IMR-90 (cell line): ENCODE measurements at regions of chrX and their contacts with region 1.

Region 1: DNA sequence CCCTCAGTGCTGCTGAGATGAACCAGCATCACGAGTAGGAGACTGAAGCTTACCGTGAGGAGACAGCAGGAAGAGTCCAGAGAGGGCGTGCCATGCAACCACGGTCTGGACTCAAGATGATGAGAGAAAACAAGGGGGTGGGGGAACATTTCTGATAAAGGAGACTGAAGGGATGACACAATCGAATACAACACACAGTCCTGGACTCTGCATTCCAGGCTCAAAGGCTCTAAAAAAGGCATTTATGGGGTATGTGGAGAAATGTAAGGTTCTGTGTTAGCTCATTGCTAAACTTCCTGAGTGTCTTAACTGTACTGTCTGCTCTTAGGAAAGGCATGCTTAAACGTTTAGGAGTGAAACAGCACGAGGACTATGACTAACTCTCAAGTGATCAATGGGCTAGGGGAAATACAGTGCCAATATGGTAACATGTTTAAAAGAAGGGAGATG is 20.6 kb upstream of the IRAK1 start:
- DNase-seq: peak; percentile 87
- ATAC-seq: peak; percentile 88
- H3K4me3 ChIP-seq: no peak overlapping the region
- H3K27ac ChIP-seq: peak overlapping the region; percentile 64; the same call in 1 of the 2 replicates
- H3K4me1 ChIP-seq: peaks cover 16% of the 10 kb centered on the region
- H3K27me3 ChIP-seq: no peaks in the 10 kb centered on the region
- CTCF ChIP-seq: no peak
- POLR2A ChIP-seq: no peak
- RAD21 ChIP-seq: no peak

Region 2: DNA sequence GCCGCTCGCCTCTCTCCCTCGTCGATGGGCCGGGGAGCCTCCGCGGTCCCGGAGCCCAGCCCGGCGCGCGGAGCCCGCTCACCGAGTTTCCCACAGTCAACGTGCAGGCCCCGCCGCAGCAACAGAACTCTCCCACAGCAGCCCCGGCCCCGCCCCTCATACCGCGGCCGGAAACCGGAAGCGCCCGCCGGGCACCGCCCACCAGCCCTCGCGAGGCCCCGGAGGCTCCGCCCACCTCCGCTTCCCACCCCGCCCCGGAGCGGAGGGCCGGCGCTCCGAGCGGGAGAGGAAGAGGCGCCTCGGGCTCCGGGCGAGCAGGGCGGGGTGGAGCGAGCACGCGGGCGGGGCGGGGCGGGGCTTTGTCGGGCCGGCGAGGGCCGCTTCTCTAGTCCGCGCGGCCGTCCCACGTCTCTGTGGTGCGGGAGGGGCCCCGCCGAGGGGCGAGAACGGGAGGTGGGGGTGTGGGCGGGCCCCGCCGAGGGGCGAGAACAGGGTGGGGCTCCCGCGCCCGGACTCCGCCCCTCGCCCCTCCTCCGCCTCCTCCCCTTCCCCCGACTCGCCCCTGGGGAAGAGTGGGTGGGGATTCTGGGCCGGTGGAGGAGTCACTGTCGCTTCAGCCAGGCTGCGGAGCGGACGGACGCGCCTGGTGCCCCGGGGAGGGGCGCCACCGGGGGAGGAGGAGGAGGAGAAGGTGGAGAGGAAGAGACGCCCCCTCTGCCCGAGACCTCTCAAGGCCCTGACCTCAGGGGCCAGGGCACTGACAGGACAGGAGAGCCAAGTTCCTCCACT is 315.9 kb before region 1 on chrX and contains the starts of genes ABCD1 and BCAP31:
- CTCF ChIA-PET with region 1: no interaction called
- POLR2A ChIA-PET with region 1: no interaction called
- dilution Hi-C with region 1: no loop called
- in situ Hi-C with region 1: no loop called
- intact Hi-C with region 1: no loop called
- DNase-seq: peak; percentile 78
- ATAC-seq: peak; percentile 86
- H3K4me3 ChIP-seq: peak within 1 kb of the TSS; percentile 82
- H3K27ac ChIP-seq: peak within 1 kb of the TSS; percentile 77
- H3K4me1 ChIP-seq: peaks cover 17% of the 10 kb centered on the region
- H3K27me3 ChIP-seq: no peaks in the 10 kb centered on the region
- CTCF ChIP-seq: no peak
- POLR2A ChIP-seq: peak; percentile 84
- RAD21 ChIP-seq: no peak
- total RNA-seq, gene ABCD1: 4.3 and 4.7 TPM in 2 replicates
- total RNA-seq, gene BCAP31: 166 and 244 TPM in 2 replicates

Region 3: DNA sequence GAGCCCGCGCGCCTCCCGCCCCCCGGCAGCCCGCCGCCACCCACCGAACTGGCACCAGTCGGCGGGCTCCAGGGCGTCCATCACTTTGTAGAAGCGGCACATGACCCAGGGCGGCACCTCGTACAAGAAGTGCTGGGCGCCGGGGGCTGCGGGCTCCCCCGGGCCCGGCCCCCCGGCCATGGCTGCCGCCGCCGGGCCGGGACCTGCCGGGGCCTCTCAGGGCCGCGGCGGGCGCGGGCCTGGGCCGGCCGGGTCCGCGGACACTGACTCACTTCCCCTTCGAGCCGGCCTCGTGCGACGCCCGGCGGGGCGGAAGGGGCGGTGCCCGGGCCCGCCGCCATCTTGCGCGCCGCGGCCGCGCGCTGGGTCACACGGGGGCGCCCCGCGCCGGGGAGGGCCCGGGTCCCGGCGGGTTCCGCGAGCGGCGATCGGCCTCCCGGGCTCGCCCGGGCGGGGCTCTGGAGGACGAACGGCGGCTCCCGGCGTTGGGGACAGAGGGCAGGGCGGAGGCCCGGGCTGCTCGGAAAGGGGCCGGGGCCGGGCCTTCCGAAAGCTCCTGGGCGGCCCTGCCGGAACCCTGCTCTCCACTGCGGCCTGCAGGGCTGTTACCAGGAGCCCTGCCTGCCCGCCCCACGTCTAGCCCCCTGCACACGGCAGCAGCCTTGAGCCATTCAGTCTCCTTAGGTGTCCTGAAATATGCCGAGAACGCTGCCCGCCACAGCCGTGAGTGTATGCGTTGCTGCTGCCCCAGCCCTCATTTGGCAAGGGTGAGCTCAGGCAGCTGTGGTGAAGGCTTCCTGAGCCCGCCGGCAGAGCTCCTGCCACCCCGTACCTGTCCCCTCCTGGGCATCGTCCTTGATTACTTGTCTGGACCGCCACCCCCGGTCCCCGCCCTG is 20.5 kb before region 1 on chrX and contains the start of gene IRAK1:
- CTCF ChIA-PET with region 1: no interaction called
- POLR2A ChIA-PET with region 1: no interaction called
- dilution Hi-C with region 1: no loop called
- in situ Hi-C with region 1: no loop called
- intact Hi-C with region 1: loop called (anchors 1 kb)
- DNase-seq: peak; percentile 52
- ATAC-seq: peak; percentile 79
- H3K4me3 ChIP-seq: peak within 1 kb of the TSS; percentile 59
- H3K27ac ChIP-seq: peak within 1 kb of the TSS; percentile 93
- H3K4me1 ChIP-seq: peaks cover 24% of the 10 kb centered on the region
- H3K27me3 ChIP-seq: no peaks in the 10 kb centered on the region
- CTCF ChIP-seq: 0 out of 2 replicates have a peak, but pooled peaks have one; percentile 17
- POLR2A ChIP-seq: peak; percentile 42; the same call in 1 of the 2 replicates
- RAD21 ChIP-seq: no peak
- total RNA-seq, gene IRAK1: 31.9 and 33.3 TPM in 2 replicates

Region 4: DNA sequence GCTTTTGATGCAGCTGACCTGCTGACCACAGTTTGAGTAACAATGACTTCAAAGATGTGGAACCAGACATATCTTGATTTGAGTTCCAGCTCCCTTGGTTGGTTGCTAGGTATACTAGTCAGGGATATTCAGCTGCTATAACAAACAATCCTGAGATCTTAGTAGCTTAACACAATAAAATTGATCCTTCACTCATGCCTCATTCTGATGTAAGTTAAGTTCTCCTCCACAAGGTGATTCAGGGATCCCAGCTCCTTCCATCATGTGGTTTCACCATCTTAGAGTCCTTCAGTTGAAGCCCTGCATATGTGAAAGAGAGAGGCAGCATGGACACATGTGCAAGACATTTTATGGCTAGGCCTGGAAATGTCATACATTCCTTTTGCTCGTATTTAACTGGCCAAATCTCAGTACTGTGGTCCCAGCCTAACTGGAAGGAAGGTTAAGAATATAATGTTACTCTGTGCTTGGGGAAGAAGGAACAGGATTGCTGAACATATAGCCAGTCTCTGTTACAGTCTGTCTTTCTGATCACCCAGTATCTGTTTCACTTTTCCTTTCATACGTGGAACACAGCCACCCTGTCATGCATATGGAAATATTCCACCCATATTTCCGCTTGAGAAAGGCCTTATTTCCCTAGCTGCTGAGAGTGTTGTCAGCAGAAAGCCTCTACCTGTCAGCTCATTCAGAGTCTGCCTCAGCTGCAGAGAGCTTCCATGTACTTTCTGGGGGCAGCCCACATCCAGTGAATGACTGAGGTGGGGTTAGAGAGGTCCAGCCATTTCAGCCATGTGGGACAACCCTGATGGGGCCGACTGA is 787.1 kb after region 1 on chrX:
- CTCF ChIA-PET with region 1: no interaction called
- POLR2A ChIA-PET with region 1: no interaction called
- dilution Hi-C with region 1: no loop called
- in situ Hi-C with region 1: no loop called
- intact Hi-C with region 1: no loop called
- DNase-seq: no peak
- ATAC-seq: no peak
- H3K4me3 ChIP-seq: no peak overlapping the region
- H3K27ac ChIP-seq: no peak overlapping the region
- H3K4me1 ChIP-seq: no peaks in the 10 kb centered on the region
- H3K27me3 ChIP-seq: no peaks in the 10 kb centered on the region
- CTCF ChIP-seq: no peak
- POLR2A ChIP-seq: no peak
- RAD21 ChIP-seq: no peak